ENCODE measurements at regions of chr18 and their contacts with region 1.

Region 1: GRCh38 chr18:3604498-3605408 is 154.8 kb downstream of the TGIF1 start:
- DNase-seq: peak; percentile 60
- H3K4me3 Mint-ChIP-seq: no peak overlapping the region
- H3K27ac Mint-ChIP-seq: no peak overlapping the region
- H3K4me1 Mint-ChIP-seq: peaks cover 13% of the 10 kb centered on the region
- H3K27me3 Mint-ChIP-seq: no peaks in the 10 kb centered on the region

Region 2: GRCh38 chr18:2978646-2979045 is 626.1 kb before region 1 on chr18:
- CTCF ChIA-PET with region 1: no interaction called
- intact Hi-C with region 1: loop called (anchors 5 kb)
- DNase-seq: peak; percentile 66
- H3K4me3 Mint-ChIP-seq: peak overlapping the region; percentile 54
- H3K27ac Mint-ChIP-seq: peak overlapping the region; percentile 92
- H3K4me1 Mint-ChIP-seq: peaks cover 91% of the 10 kb centered on the region
- H3K27me3 Mint-ChIP-seq: no peaks in the 10 kb centered on the region

Region 3: DNA sequence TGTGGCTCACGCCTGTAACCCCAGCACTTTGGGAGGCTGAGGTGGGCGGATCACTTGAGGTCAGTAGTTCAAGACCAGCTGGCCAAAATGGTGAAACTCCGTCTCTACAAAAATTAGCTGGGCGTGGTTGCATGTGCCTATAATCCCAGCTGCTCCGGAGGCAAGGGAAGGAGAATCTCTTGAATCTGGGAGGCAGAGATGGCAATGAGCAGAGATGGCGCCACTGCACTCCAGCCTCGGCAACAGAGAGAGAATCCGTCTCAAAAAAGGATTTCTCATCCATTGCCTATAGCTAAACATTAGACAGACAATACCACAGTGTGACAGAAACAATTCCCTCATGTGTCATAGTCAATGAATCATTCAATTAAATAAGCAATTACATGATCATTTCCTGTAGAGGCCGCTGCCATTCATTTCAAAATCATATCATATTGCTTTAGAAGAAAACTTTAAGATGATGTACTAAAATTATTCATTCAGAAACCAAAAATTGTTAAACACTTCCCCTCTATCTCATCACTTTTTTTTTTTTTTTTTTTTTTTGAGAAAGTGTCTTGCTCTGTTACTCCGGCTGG is 224.3 kb before region 1 on chr18:
- CTCF ChIA-PET with region 1: interaction called, 3 read pairs
- intact Hi-C with region 1: loop called (anchors 1 kb)
- DNase-seq: peak; percentile 37
- H3K4me3 Mint-ChIP-seq: no peak overlapping the region
- H3K27ac Mint-ChIP-seq: no peak overlapping the region
- H3K4me1 Mint-ChIP-seq: peaks cover 7% of the 10 kb centered on the region
- H3K27me3 Mint-ChIP-seq: no peaks in the 10 kb centered on the region

Region 4: DNA sequence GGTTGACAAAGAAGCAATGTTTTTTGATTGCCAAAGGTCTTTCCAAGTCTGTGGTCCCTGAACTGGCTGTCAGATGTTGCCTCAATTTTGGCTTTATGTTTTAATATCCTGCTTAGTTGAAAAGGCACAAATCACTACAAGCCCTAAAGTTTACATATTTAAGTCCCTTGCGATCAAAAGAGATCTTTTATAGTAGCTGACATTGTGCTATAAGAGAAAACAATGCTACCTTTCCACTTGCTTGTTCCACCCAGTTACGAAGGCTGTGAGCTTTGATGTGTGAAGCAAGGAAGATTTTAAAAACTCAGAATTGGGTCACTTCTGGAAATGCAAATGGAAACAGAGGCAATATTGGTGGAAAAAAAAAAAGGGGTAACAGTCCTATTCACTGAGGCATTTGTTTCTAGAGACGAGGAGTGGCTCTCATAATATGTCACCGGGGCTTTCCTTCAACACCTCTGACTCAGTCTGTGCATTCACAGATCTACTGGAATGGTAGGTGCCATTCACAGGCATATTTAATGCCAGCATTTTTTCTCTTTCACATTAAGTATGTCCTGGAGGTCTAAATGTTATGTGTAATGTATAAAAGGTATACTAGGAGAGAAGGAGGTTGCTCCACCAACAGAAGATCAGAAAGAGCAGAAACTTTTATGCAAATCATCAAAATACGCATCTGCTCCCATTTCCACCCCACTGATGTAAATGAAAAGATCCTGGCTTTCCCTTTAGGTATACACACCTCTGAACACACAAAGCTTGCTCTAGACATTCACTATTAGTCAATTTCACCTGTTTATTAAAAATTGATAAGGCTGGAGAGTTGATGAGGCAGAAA is 63.0 kb before region 1 on chr18:
- CTCF ChIA-PET with region 1: no interaction called
- intact Hi-C with region 1: loop called (anchors 1 kb)
- DNase-seq: peak; percentile 71
- H3K4me3 Mint-ChIP-seq: peak overlapping the region; percentile 0
- H3K27ac Mint-ChIP-seq: peak overlapping the region; percentile 66
- H3K4me1 Mint-ChIP-seq: peaks cover 24% of the 10 kb centered on the region
- H3K27me3 Mint-ChIP-seq: peaks cover 8% of the 10 kb centered on the region

Region 5: GRCh38 chr18:3645384-3646156 is 40.8 kb after region 1 on chr18:
- CTCF ChIA-PET with region 1: interaction called, 5 read pairs
- intact Hi-C with region 1: loop called (anchors 1 kb)
- DNase-seq: no peak
- H3K4me3 Mint-ChIP-seq: no peak overlapping the region
- H3K27ac Mint-ChIP-seq: no peak overlapping the region
- H3K4me1 Mint-ChIP-seq: peaks cover 32% of the 10 kb centered on the region
- H3K27me3 Mint-ChIP-seq: no peaks in the 10 kb centered on the region

Region 6: DNA sequence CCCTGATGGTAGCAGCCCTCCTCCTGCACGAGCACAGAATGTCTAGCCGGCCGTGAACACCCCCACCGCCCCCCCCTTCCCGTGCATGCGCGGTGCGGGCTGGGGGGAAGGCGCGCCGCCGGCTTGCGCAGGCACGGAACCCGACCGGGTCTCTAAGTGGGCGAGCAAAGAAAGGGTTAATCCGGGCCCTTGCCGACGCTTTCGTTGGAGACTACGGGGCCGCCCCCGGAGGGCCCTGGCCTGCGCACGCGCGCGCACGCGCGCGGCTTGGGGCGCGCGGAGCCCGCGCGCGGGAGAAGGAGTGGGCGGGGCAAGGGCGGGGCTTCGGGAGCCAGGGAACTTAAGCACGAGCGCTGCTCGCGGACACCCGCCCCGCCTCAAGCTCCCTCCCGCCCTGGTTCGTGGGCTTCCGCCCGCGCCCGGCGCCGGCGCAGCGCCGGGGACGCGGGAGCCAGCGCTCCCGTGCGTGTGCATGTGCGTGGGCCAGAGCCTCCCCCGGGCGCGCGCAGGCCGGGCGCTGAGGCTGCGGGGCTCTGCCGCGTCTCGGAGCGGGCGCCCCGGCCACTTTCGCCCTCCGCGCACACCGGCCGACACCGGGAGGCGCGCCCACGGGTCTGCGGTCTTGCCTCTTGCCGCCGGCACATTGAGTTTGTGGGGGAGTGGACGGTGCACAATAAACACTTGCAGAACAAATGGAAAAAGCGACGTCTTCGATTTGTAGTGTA is 1691.4 kb after region 1 on chr18:
- CTCF ChIA-PET with region 1: no interaction called
- intact Hi-C with region 1: loop called (anchors 2 kb)
- DNase-seq: peak; percentile 93
- H3K4me3 Mint-ChIP-seq: peak overlapping the region; percentile 93
- H3K27ac Mint-ChIP-seq: peak overlapping the region; percentile 94
- H3K4me1 Mint-ChIP-seq: peaks cover 22% of the 10 kb centered on the region
- H3K27me3 Mint-ChIP-seq: no peaks in the 10 kb centered on the region

Measured in activated naive CD4-positive, alpha-beta T cell treated with anti-CD3 and anti-CD28 coated beads for 36 hours (primary cell).